Transverse colon (tissue), 4 donors: ENCODE measurements at regions of chr5 and their contacts with region 1.

Region 1: DNA sequence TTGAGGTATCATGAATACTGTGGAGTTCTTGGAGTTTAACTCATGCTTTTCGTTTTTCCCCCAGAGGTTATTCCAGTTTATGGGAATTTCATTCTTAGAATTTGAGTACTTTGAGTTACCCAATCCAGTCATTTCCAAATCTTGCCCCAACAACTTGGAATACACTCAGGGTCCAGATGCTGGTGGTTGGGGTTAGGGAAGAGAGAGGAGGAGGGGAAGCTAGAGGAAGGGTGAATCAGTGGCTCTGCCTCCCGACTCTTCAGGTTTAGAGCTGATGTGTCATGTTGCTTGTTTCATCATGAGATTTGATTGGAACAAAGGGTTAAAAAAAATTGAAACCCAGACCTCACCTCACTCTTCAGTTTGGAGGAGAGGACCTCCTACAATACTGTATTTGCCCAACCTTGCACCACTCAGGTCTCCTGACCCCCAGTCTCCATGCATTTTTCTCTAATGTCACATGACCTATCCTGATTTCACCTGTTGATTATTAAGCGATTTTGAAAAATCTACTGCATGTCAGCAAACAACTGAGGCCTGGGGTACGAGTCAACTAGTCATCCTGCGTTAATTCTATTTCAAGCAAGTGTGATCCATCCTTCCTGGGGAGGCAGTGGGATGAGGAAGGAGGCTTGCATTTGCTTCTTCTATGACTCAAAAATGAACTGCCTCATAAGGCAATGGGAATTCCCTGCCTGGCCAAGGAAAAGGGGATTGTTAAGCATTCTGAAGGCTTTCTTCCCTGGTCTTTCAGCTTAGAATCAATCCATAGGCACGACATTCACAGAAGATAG is 6.2 kb upstream of the SLC1A3 start:
- DNase-seq: no peak
- H3K4me3 ChIP-seq: no peak overlapping the region
- H3K27ac ChIP-seq: no peak overlapping the region
- H3K4me1 ChIP-seq: no peaks in the 10 kb centered on the region
- H3K27me3 ChIP-seq: peaks cover 16% of the 10 kb centered on the region
- CTCF ChIP-seq: no peak
- EP300 ChIP-seq: no peak
- POLR2A ChIP-seq: no peak

Region 2: GRCh38 chr5:35707659-35708058 is 892.5 kb before region 1 on chr5:
- in situ Hi-C with region 1: no loop called
- intact Hi-C with region 1: loop called (anchors 10 kb)
- DNase-seq: no peak
- H3K4me3 ChIP-seq: no peak overlapping the region
- H3K27ac ChIP-seq: no peak overlapping the region
- H3K4me1 ChIP-seq: no peaks in the 10 kb centered on the region
- H3K27me3 ChIP-seq: no peaks in the 10 kb centered on the region
- CTCF ChIP-seq: no peak
- EP300 ChIP-seq: no peak
- POLR2A ChIP-seq: no peak

Region 3: DNA sequence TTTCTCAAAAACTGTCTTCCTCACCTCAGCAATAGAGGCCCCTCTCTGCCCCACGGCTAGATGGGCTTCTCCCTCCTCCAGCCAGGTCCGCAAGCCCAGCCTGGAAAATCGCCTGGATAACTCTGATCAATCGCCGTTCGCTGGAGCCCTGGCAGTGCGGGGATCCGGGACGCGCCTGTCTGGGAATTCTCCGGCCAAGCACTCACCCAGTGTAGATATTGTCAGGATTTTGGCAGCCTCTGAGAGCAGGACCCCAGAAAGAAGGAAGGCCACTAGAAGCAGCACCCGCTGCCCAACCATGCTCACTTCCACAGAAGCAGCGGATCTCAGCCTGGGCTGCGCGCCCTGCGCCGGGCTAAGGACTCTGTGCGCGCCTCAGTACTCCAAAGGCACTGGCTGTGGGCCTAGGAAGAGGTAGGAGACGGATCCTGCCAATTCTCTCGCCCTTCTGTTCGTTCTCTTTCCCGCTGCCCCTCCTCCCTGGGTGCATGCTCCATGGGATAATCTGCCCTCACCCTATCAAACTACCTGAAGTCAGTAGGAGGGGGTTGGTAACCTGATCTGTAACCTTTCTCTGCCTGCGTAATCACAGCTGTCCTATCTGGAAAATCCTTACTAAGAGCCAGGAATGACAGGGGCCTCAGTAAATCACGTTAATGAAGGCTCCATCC is 609.1 kb before region 1 on chr5 and contains the start of gene UGT3A1:
- in situ Hi-C with region 1: no loop called
- intact Hi-C with region 1: no loop called
- DNase-seq: no peak
- H3K4me3 ChIP-seq: no peak within 1 kb of the TSS
- H3K27ac ChIP-seq: no peak within 1 kb of the TSS
- H3K4me1 ChIP-seq: no peaks in the 10 kb centered on the region
- H3K27me3 ChIP-seq: peaks cover 9% of the 10 kb centered on the region
- CTCF ChIP-seq: no peak
- EP300 ChIP-seq: no peak
- POLR2A ChIP-seq: no peak
- total RNA-seq, gene UGT3A1: not detected

Region 4: DNA sequence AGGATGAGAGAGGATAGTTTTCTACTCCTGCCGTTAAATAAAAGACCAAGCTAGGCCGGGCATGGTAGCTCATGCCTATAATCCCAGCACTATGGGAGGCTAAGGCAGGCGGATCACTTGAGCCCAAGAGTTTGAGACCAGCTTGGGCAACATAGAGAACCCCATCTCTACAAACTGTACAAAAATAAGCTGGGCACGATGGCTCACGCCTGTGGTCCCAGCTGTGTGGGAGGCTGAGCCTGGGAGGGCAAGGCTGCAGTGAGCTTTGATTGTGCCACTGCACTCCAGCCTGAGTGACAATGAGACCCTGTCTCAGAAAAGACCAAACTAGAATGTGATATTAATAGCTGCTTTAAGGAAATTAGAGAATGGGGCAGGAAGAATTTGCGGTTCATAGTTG is 434.8 kb after region 1 on chr5:
- in situ Hi-C with region 1: no loop called
- intact Hi-C with region 1: no loop called
- DNase-seq: no peak
- H3K4me3 ChIP-seq: no peak overlapping the region
- H3K27ac ChIP-seq: no peak overlapping the region
- H3K4me1 ChIP-seq: no peaks in the 10 kb centered on the region
- H3K27me3 ChIP-seq: no peaks in the 10 kb centered on the region
- CTCF ChIP-seq: no peak
- EP300 ChIP-seq: no peak
- POLR2A ChIP-seq: no peak

Region 5: GRCh38 chr5:37248970-37249686 is 648.9 kb after region 1 on chr5 and contains the start of gene CPLANE1:
- in situ Hi-C with region 1: no loop called
- intact Hi-C with region 1: no loop called
- DNase-seq: peak; percentile 72
- H3K4me3 ChIP-seq: peak within 1 kb of the TSS; percentile 60 to 86 (median 74)
- H3K27ac ChIP-seq: peak within 1 kb of the TSS; percentile 84 to 90 (median 90)
- H3K4me1 ChIP-seq: peaks cover 5 to 25% (median 13%) of the 10 kb centered on the region in 4 donors
- H3K27me3 ChIP-seq: no peaks in the 10 kb centered on the region
- CTCF ChIP-seq: no peak
- EP300 ChIP-seq: no peak
- POLR2A ChIP-seq: peak; percentile 68
- total RNA-seq, gene CPLANE1: 18.1 to 67.7 (median 24.2) TPM